ENCODE measurements at regions of chr3 and their contacts with region 1.

Region 1: GRCh38 chr3:46078712-46079400 is 51.6 kb upstream of the XCR1 start:
- DNase-seq: peak; percentile 72
- CTCF ChIP-seq: peak; percentile 98

Region 2: DNA sequence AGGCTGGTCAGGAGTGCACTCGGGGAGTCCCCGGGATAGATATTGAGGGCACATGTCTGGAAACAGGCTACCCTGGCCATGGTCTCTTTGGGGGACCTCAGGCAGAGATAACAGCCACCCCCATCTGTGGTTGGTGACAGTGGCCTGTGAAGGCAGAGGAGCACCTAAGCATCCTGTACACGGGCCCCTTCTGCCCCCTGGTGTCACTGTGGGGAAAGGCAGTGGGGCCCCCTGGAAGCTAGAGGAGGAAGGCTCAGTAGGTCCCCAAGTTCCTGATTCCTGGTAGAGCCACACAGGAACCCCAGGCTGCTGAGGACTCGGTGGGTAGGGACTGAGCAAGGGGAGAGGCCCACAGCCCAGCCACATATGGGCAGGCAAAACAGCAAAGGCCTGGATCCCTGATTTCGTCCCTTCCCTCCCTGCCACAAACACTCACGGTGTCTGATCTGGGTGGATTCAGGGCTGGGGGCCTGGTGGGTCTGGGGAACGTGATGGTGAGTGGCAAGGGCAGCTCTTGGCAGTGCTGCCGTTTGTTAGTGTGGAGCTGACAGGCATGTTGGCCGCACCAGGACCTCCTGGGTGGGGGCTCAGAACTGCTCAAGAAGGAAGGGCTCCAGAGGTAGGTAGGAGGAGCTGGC is 149.7 kb before region 1 on chr3:
- CTCF ChIA-PET with region 1: interaction called, 99 read pairs
- POLR2A ChIA-PET with region 1: no interaction called
- DNase-seq: peak; percentile 88
- CTCF ChIP-seq: peak; percentile 97

Region 3: DNA sequence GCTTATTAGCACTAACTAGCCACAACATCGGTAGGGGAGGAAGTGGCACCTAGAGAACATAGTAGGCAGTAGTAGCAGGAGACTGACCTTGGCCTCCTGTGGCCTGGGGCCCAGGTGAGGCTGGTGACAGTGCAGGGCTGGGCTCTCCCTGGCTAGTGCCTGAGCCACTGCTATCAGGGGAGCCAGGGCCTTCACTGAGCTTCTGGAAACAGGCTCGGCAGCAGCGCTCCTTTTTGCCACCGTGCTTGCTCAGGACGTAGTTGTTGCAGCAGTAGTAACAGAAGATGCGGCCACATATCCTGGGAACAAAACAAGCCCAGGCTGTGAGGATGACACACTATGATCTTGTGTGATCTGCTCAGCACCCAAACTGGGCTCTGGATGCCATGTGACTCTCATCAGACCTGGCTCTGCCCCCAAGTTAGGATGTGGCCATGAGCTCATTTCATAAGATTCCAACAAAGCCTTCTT is 120.5 kb before region 1 on chr3:
- CTCF ChIA-PET with region 1: interaction called, 106 read pairs
- POLR2A ChIA-PET with region 1: no interaction called
- DNase-seq: no peak
- CTCF ChIP-seq: no peak

Region 4: DNA sequence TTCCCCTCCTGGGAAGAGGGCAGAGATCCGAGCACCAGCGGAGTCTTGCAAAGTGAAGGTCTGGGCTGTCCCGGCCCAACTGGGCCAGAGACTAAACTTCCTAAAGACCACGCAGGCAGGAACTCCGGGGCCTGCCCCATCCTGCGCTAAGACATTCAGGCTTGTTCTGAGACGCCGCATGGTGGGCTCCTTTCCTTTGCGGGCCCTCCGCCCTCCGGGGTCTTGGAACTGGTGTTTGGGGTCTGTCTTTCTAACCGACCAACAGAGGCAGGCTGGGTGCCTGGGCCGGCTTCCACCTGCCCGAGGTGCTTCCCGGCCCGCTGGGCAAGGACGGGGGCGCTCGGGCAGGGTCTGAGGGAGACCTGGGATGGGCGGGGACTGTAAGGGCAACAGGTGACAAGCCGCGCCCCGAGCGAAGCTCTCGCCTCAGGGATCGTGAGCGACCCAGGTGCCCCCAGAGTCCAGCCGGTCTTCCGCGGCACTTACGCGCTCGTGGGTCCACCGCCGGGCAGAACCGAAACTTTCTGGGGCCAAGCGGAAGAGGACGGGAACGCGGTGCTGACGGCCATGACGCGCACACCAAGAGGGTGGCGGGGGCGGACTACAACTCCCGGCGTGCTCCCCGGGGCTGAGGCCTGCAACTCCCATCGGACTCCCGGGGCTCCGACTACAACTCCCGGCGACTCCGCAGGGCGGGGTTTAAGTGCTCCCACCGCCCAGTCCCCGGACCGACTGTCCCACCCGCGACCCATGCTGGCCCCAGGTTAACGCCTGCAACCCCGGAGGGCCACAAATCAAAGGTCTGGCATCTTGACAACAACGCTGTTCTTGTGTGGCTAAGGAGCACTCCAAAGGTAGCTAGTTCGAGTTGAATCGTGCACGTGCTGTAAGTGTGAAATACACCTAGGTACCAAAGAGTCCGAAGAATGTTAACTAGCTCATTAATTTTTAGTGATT is 83.3 kb before region 1 on chr3 and contains the start of gene FYCO1:
- CTCF ChIA-PET with region 1: interaction called, 22 read pairs
- POLR2A ChIA-PET with region 1: no interaction called
- DNase-seq: peak; percentile 95
- CTCF ChIP-seq: no peak

Region 5: GRCh38 chr3:46049116-46049515 is 29.7 kb before region 1 on chr3:
- CTCF ChIA-PET with region 1: interaction called, 24 read pairs
- POLR2A ChIA-PET with region 1: no interaction called
- DNase-seq: no peak
- CTCF ChIP-seq: no peak

Region 6: GRCh38 chr3:46276502-46277099 is 197.7 kb after region 1 on chr3:
- CTCF ChIA-PET with region 1: no interaction called
- POLR2A ChIA-PET with region 1: no interaction called
- DNase-seq: peak; percentile 63
- CTCF ChIP-seq: peak; percentile 69

Region 7: DNA sequence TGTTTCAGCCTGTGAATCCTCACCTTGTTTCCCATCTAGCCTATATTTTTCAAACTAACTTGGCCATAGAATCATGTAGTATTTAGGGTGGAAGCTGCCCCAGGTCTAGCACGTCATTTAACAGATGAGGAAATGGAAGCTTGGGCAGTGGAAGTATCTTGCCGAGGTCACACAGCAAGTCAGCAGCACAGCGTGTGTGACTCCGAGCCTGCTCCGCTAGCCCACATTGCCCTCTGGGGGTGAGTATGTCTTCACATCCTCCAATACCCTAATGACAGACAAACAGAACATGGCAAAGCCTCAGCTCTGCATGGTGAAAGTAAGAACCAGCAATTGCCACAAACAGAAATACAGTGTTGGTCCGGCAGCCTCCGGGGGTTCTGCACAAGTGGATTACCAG is 289.7 kb after region 1 on chr3:
- CTCF ChIA-PET with region 1: interaction called, 27 read pairs
- POLR2A ChIA-PET with region 1: no interaction called
- DNase-seq: peak; percentile 59
- CTCF ChIP-seq: peak; percentile 47

Measured in GM10248 (cell line).